Panc1 (cell line): ENCODE measurements at regions of chr14 and their contacts with region 1.

Region 1: GRCh38 chr14:30621940-30622830 is at the start of gene SCFD1:
- DNase-seq: peak; percentile 63
- ATAC-seq: peak; percentile 99
- H3K4me3 ChIP-seq: peak within 1 kb of the TSS; percentile 97 to 98
- H3K27ac ChIP-seq: peak within 1 kb of the TSS; percentile 95
- H3K4me1 ChIP-seq: peaks cover 3% of the 10 kb centered on the region; the same call in 1 of the 2 replicates
- H3K27me3 ChIP-seq: no peaks in the 10 kb centered on the region
- CTCF ChIP-seq: no peak
- total RNA-seq, gene SCFD1: 43.8 TPM

Region 2: GRCh38 chr14:30558675-30559555 is 63.3 kb before region 1 on chr14 and contains the start of gene G2E3:
- CTCF ChIA-PET with region 1: no interaction called
- POLR2A ChIA-PET with region 1: no interaction called
- in situ Hi-C with region 1: no loop called
- intact Hi-C with region 1: no loop called
- DNase-seq: peak; percentile 50
- ATAC-seq: peak; percentile 99
- H3K4me3 ChIP-seq: peak within 1 kb of the TSS; percentile 87 to 91
- H3K27ac ChIP-seq: peak within 1 kb of the TSS; percentile 92
- H3K4me1 ChIP-seq: peaks cover 14% of the 10 kb centered on the region
- H3K27me3 ChIP-seq: no peaks in the 10 kb centered on the region
- CTCF ChIP-seq: no peak
- total RNA-seq, gene G2E3: 27.5 TPM

Region 3: GRCh38 chr14:31106768-31107167 is 484.6 kb after region 1 on chr14:
- CTCF ChIA-PET with region 1: interaction called, 12 read pairs
- POLR2A ChIA-PET with region 1: no interaction called
- in situ Hi-C with region 1: no loop called
- intact Hi-C with region 1: no loop called
- DNase-seq: no peak
- ATAC-seq: no peak
- H3K4me3 ChIP-seq: no peak overlapping the region
- H3K27ac ChIP-seq: no peak overlapping the region
- H3K4me1 ChIP-seq: no peaks in the 10 kb centered on the region
- H3K27me3 ChIP-seq: no peaks in the 10 kb centered on the region
- CTCF ChIP-seq: no peak

Region 4: DNA sequence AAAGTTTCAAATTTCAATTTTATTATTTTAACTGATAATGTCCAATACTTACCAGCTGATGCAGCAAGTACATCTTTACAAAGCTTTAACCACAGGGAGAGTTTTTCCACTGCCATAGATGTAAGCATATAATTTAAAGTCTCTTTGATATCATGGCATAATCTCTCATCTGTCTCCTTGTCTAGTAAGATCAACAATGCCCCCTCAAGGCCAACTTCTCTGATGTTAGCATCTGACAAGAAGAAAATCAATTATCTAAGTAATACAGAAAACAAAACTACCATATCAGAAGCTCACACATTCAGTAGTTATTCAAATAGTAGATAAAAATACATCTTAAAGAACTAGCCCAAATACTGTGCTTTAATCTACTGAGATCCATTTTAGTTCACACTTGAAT is 703.9 kb after region 1 on chr14:
- CTCF ChIA-PET with region 1: no interaction called
- POLR2A ChIA-PET with region 1: interaction called, 11 read pairs
- in situ Hi-C with region 1: no loop called
- intact Hi-C with region 1: no loop called
- DNase-seq: peak; percentile 2
- ATAC-seq: no peak
- H3K4me3 ChIP-seq: no peak overlapping the region
- H3K27ac ChIP-seq: no peak overlapping the region
- H3K4me1 ChIP-seq: no peaks in the 10 kb centered on the region
- H3K27me3 ChIP-seq: no peaks in the 10 kb centered on the region
- CTCF ChIP-seq: no peak; the same call in 1 of the 2 replicates